Aorta (tissue), 5 donors: ENCODE measurements at regions of chr3 and their contacts with region 1.

Region 1: DNA sequence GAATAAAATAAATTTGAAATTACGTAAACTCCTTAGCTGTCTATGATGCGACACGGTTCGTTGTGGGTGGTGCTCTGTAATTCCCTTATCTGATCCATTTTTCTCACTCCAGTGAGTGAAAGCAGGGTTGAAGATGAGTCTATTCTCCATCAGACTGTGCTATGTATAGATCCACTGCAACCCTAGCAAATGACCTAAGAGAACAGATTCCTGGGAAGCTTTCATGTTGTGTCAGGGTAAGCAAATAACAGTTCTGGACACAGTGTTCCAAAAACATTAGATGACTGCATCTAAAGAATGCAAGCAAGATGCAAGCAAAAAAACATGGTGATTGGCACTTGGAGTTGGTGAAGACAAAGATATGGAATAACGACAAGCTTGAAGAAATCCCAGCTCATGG is 239.3 kb downstream of the SLC9A9 start:
- DNase-seq: no peak
- ATAC-seq: no peak
- H3K4me3 ChIP-seq: no peak overlapping the region
- H3K27ac ChIP-seq: no peak overlapping the region
- H3K4me1 ChIP-seq: no peaks in the 10 kb centered on the region
- H3K27me3 ChIP-seq: no peaks in the 10 kb centered on the region

Region 2: GRCh38 chr3:143414571-143415253 is 194.3 kb before region 1 on chr3:
- intact Hi-C with region 1: loop called in 1 of 2 experiments (anchors 10 kb)
- DNase-seq: no peak
- ATAC-seq: no peak
- H3K4me3 ChIP-seq: no peak overlapping the region
- H3K27ac ChIP-seq: no peak overlapping the region
- H3K4me1 ChIP-seq: peaks cover 0 to under 1% of the 10 kb centered on the region in 2 donors
- H3K27me3 ChIP-seq: no peaks in the 10 kb centered on the region

Region 3: GRCh38 chr3:144085979-144086378 is 477.0 kb after region 1 on chr3:
- intact Hi-C with region 1: no loop called
- DNase-seq: no peak
- ATAC-seq: no peak
- H3K4me3 ChIP-seq: no peak overlapping the region
- H3K27ac ChIP-seq: no peak overlapping the region
- H3K4me1 ChIP-seq: no peaks in the 10 kb centered on the region
- H3K27me3 ChIP-seq: no peaks in the 10 kb centered on the region